GM18951 (cell line): ENCODE measurements at regions of chr16 and their contacts with region 1.

Region 1: DNA sequence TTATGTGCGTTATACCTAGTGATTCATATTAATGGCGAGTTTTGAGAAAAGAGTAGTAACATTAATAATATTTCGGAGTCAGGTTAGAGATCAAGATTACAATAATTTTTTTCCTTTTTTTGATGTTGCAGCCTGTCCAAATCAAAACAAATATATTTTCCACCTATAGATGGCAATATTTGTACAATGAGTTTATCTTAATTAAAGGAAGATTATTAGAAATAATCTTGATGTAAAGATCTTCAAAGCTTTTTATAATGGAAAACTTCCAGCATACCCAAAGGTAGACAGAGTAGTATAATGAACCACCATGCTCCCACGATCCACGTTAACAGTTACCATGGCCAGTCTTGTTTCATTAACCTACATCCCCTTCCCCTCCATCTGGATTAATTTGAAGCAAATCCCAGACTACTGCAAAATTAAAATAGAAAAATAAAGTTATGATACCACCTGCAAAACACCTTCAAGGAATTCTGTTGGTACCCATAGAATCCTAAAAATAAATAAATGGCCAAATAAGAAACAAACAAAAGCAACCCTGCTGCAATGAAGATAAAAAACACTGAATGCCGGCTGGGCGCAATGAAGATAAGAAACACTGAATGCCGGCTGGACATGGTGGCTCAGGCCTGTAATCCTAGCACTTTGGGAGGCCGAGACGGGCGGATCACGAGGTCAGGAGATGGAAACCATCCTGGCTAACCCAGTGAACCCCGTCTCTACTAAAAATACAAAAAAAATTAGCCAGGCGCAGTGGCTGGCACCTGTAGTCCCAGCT is 46.5 kb upstream of the GINS3 start:
- POLR2A ChIP-seq: no peak

Region 2: DNA sequence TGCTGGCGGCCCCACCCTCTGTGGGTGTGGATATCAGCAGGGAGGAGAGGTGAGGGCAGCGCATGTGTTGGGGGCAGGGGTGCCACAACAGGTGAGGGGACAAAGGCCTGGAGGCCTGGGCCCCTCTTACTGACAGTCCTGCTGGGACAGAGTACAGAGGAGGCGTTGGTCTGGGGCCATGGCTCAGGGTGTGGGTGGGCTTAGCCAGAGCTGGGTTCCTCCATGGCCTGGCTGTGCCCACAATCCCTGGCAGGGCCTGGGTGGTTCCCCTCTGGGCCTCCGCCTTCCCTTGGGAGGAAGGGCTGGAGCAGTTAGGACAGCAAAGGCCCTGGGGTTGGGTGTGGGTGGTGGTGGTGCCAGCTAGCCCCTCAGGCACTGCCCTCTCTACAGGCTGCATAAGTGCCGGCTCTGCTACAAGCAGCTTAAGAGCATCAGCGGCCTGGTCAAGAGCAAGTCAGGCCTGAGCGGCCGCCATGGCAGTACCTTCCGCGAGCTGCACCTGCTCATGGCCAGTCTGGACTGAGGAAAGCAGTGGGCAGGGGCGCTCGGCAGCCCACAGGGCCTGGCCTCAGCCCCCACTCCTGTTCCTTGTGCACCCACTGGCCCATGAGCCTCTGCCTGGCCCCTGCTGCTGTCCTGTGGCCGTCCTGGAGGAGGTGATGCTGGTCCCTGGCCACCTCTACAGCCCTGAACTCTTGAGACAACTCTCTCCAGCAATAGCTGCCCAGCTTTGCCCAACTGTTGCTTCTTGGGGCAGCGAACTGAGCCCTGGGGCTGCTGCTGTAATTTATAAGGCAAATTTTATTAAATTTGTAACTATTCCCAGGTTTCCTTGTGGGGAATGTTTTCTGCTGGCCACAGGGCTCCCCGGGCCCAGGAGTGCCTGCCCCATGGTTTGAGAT is 589.1 kb before region 1 on chr16:
- in situ Hi-C with region 1: no loop called
- POLR2A ChIP-seq: no peak

Region 3: DNA sequence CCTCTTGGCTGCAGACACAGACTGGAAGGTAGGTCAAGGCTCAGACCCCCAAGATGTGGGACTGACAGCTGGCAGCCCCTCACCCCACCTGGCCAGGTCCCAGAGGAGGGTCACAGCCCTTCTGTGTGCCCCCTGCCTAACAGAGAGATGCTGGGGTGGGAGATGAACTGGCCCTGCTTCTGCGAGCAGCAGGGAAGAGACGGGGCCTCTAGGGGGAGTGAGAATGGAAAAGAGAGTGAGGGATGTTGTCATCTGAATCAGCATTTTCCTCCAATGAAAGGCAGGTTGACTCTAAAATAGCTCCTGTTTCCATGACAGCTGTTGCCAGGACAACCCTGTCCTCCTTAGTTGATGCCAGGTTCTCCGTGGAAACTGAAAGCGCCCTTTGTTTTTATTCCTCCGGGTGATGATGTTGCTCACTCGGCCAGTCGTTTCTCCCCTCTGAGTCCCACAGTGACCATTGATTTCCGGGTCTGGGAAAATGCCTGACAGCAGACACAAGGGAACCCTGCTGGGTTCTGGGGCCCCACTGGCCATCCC is 149.3 kb after region 1 on chr16:
- in situ Hi-C with region 1: loop called (anchors 5 kb)
- POLR2A ChIP-seq: no peak

Region 4: DNA sequence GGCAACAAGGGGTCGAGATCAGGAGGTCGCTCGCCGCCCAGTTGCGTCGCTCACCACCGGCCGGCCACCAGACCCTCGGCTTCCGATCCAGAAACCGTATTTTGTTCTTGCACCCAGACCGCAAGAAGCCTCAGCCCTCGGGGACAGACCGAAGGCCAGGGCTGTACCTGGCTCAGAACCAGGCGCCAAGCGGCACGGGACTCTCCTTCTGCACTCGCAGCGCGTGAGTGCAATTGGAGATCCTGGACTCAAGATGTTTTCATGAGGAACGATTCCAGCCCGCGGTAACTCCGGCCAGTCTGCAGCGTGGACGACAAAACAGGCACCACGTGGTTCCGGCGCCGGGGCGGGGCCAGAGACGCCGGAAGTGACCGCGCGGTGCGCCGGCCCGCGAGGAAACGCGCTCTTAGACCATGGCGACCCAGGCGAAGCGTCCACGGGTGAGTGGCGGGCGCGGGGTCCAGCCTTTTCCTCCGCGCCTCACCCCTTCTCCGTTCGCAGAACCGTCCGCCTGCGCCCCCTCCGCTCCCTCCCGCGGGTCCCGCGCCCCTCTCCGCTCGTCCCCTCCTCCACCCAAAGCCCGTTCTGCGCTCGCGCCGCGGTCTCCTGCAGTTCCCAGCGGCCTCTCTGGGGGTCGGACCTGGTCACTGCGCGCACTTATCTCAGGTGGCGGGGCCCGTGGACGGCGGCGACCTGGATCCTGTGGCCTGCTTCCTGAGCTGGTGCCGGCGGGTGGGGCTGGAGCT is 169.5 kb after region 1 on chr16 and contains the start of gene SETD6:
- in situ Hi-C with region 1: no loop called
- POLR2A ChIP-seq: peak; percentile 53